ENCODE measurements at regions of chr11 and their contacts with region 1.

Region 1: GRCh38 chr11:17906436-17906835 is 106.4 kb downstream of the SERGEF start:
- DNase-seq: peak; percentile 28
- ATAC-seq: peak; percentile 50; the same call in 1 of the 2 replicates
- H3K4me3 ChIP-seq: no peak overlapping the region
- H3K27ac ChIP-seq: no peak overlapping the region
- H3K4me1 ChIP-seq: no peaks in the 10 kb centered on the region
- H3K27me3 ChIP-seq: no peaks in the 10 kb centered on the region
- CTCF ChIP-seq: peak; percentile 41

Region 2: DNA sequence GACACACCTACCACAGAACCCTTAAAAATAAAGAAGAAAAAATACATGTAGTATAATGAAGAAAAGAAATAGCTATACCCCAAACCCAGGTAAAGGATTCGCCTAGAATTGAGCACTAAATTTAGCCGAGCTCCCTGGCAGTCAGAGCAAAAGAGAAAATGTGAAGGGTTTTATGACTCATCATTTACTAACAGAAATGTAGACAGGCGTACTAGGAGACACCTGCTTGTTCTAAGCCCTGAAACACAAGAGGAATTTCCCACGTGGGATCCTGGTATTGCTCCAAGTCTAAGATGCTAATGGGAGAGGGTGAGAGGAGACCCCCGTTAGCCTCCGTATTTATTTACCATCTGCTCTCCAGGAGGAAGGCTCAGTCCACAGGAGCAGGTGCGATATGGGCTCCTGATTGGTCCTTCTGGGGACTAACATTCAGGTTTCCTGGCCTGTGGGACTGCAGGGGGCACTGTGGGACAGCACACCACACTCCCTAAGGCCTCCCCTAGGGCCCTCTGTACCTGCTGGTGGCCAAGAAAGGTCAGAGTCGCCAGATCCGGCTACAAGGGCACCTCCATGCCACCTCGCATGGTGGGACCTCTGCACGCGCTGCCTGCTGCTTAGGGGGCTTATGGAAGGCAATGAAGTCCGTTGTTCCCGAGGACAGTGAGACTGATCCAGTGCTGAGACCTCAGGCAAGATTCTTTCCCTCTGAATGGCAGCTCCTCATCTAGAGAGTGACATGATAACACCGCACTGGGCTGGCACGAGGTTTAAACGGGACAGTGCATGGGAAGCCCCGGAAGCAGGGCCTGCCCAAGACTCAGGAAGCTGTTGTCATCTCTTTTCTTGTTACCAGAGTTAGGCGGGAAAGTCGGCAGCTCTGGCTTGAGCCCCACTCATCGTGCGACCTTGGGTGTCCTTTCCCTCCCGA is 146.1 kb before region 1 on chr11:
- CTCF ChIA-PET with region 1: no interaction called
- POLR2A ChIA-PET with region 1: no interaction called
- intact Hi-C with region 1: loop called (anchors 2 kb)
- DNase-seq: peak; percentile 64
- ATAC-seq: peak; percentile 96
- H3K4me3 ChIP-seq: peak overlapping the region; percentile 31; the same call in 1 of the 2 replicates
- H3K27ac ChIP-seq: no peak overlapping the region
- H3K4me1 ChIP-seq: 0 out of 2 replicates have a peak, but pooled peaks cover 3% of the 10 kb centered on the region
- H3K27me3 ChIP-seq: no peaks in the 10 kb centered on the region
- CTCF ChIP-seq: peak; percentile 81

Measured in PC-3 (cell line).